Activated CD4-positive, alpha-beta T cell treated with anti-CD3 and anti-CD28 coated beads, Interleukin-2, amount 10 ng/mL, durations not matched to agents 24 days and 14 days (primary cell): ENCODE measurements at regions of chr1 and their contacts with region 1.

Region 1: DNA sequence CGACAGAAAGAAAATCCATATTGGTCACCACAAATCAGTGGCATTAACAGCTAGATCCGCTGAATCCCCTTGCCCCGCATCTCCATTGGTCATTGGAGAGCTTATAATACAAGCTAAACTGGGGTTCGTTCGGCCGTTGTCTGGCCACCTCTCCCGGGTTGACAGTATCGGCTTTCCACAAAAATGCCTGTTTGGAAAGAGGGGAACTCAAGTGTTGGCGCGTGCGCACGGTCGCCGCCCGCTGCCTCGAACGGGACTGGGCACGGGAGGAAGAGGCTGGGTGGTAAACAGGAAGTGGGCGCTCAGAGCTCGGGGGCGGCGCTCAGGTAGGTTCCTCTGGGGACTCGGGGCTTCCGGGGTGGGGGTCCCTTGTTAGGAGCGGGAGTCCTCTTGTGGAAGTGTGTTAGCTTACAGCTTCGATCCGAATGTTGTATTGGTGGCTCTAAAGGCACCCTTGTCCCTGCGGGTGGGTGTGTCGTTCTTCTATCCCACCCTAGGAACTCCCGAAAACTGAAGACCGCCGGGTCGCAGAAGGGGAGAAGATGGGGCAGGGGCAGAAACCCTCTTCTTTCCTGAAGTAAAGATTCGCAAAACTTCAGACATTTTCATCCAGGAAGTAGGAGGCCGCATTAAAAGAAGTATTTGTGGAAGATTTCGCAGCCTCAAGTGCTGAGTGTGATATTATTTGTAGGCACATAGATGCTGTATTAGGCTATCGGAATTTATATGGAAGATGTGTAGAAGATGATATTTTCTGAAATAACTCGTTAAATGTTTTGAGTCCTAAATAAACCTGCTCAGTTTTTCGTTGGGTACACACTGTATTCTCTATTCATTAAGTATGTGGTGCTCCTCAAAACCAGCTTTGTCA is 962 bp downstream of the BROX start:
- DNase-seq: peak; percentile 96
- H3K4me3 Mint-ChIP-seq: peak overlapping the region; percentile 99
- H3K27ac Mint-ChIP-seq: peak overlapping the region; percentile 94
- H3K4me1 Mint-ChIP-seq: peaks cover 39% of the 10 kb centered on the region
- H3K27me3 Mint-ChIP-seq: no peaks in the 10 kb centered on the region

Region 2: GRCh38 chr1:222465211-222466041 is 247.9 kb before region 1 on chr1:
- intact Hi-C with region 1: loop called (anchors 1 kb)
- DNase-seq: peak; percentile 95
- H3K4me3 Mint-ChIP-seq: peak overlapping the region; percentile 81
- H3K27ac Mint-ChIP-seq: peak overlapping the region; percentile 89
- H3K4me1 Mint-ChIP-seq: peaks cover 11% of the 10 kb centered on the region
- H3K27me3 Mint-ChIP-seq: peaks cover 22% of the 10 kb centered on the region

Region 3: GRCh38 chr1:222643938-222644635 is 69.2 kb before region 1 on chr1:
- intact Hi-C with region 1: loop called (anchors 1 kb)
- DNase-seq: peak; percentile 100
- H3K4me3 Mint-ChIP-seq: peak overlapping the region; percentile 95
- H3K27ac Mint-ChIP-seq: peak overlapping the region; percentile 94
- H3K4me1 Mint-ChIP-seq: peaks cover 28% of the 10 kb centered on the region
- H3K27me3 Mint-ChIP-seq: no peaks in the 10 kb centered on the region

Region 4: DNA sequence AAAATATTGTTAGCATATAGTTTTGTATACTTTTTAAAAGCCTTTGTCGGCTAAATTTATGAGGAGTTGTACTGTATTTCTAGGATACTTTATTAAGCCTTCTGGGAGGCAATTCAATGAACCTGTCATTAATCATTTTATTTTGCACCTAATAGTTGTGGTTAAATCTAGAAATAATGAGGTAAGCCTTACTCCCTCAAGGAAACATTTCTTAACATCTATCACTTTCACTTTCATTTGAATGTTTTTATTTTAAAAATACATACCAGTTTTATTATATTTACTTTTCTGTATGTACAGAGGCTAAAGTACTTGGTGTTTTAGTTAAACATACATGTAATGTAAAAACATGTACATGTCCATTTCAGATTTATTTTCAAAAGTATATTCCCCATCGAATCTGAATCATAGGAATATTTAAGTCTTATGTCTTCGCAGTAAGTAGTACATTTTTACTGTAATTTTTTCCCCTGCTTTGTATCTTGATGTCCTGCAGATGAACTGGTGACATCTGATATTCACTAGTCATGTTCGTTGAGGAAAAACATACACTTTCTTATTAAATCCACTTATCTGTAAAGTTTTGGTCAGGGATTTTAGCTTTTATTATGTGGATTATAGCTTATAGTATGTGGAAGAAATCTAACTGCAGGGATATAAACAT is 184.3 kb after region 1 on chr1:
- intact Hi-C with region 1: loop called (anchors 5 kb)
- DNase-seq: no peak
- H3K4me3 Mint-ChIP-seq: peak overlapping the region; percentile 66
- H3K27ac Mint-ChIP-seq: peak overlapping the region; percentile 86
- H3K4me1 Mint-ChIP-seq: peaks cover 12% of the 10 kb centered on the region
- H3K27me3 Mint-ChIP-seq: no peaks in the 10 kb centered on the region

Region 5: GRCh38 chr1:223831755-223832636 is 1118.7 kb after region 1 on chr1:
- intact Hi-C with region 1: loop called (anchors 5 kb)
- DNase-seq: no peak
- H3K4me3 Mint-ChIP-seq: peak overlapping the region; percentile 51
- H3K27ac Mint-ChIP-seq: peak overlapping the region; percentile 85
- H3K4me1 Mint-ChIP-seq: peaks cover 29% of the 10 kb centered on the region
- H3K27me3 Mint-ChIP-seq: no peaks in the 10 kb centered on the region